ENCODE measurements at regions of chr12 and their contacts with region 1.

Region 1: DNA sequence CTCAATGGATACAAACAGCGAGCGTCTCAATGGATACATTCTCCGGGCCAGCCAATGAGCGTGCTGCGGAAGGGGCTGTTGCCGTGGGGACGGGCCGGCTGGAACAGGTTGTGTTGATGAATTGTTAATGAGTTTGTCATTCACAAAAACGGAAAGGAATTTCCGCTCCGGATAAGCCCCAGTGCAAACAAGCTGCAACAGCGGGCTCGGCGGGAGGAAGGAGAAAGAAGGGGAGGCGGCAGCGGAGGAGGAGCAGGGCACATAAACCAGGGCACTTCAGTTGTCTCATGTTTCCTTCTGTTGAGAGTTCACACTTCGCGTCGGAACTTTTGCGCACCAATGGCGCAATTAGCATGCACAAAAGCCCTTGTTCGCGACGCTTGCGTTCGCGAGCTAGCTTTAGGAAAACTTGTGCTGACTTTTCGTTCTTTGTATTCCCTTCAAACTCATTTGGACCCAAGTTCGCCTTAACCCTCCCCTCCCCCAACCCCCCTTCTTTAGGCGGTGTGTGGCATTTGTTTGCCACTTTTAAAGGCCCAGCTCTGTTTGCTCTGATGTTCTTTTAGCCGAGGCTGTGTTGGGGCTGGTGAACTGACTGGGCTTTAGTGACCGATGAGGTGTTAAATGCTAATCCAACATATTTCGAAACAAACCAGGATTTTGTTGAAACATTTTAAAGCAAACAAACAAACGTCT is at the start of gene DUSP6:
- DNase-seq: peak; percentile 97
- H3K4me3 Mint-ChIP-seq: peak within 1 kb of the TSS; percentile 92
- H3K27ac Mint-ChIP-seq: peak within 1 kb of the TSS; percentile 96
- H3K4me1 Mint-ChIP-seq: peaks cover 36% of the 10 kb centered on the region
- H3K27me3 Mint-ChIP-seq: peaks cover 2% of the 10 kb centered on the region
- total RNA-seq, gene DUSP6: 86.7 to 87.9 TPM

Region 2: GRCh38 chr12:89019408-89020120 is 333.1 kb before region 1 on chr12:
- CTCF ChIA-PET with region 1: interaction called, 6 read pairs
- POLR2A ChIA-PET with region 1: no interaction called
- intact Hi-C with region 1: loop called (anchors 1 kb)
- DNase-seq: peak; percentile 79
- H3K4me3 Mint-ChIP-seq: no peak overlapping the region
- H3K27ac Mint-ChIP-seq: no peak overlapping the region
- H3K4me1 Mint-ChIP-seq: peaks cover 8% of the 10 kb centered on the region
- H3K27me3 Mint-ChIP-seq: peaks cover 5% of the 10 kb centered on the region

Region 3: GRCh38 chr12:89162704-89163261 is 189.9 kb before region 1 on chr12:
- CTCF ChIA-PET with region 1: interaction called, 3 read pairs
- POLR2A ChIA-PET with region 1: interaction called, 13 read pairs
- intact Hi-C with region 1: loop called (anchors 1 kb)
- DNase-seq: peak; percentile 90
- H3K4me3 Mint-ChIP-seq: no peak overlapping the region
- H3K27ac Mint-ChIP-seq: no peak overlapping the region
- H3K4me1 Mint-ChIP-seq: peaks cover 13% of the 10 kb centered on the region
- H3K27me3 Mint-ChIP-seq: no peaks in the 10 kb centered on the region

Region 4: GRCh38 chr12:89252284-89252683 is 100.4 kb before region 1 on chr12:
- CTCF ChIA-PET with region 1: no interaction called
- POLR2A ChIA-PET with region 1: interaction called, 59 read pairs
- intact Hi-C with region 1: no loop called
- DNase-seq: peak; percentile 21
- H3K4me3 Mint-ChIP-seq: no peak overlapping the region
- H3K27ac Mint-ChIP-seq: peak overlapping the region; percentile 81
- H3K4me1 Mint-ChIP-seq: peaks cover 34% of the 10 kb centered on the region
- H3K27me3 Mint-ChIP-seq: no peaks in the 10 kb centered on the region

Region 5: GRCh38 chr12:89427508-89428156 is 75.0 kb after region 1 on chr12:
- CTCF ChIA-PET with region 1: no interaction called
- POLR2A ChIA-PET with region 1: interaction called, 4 read pairs
- intact Hi-C with region 1: loop called (anchors 2 kb)
- DNase-seq: peak; percentile 27
- H3K4me3 Mint-ChIP-seq: no peak overlapping the region
- H3K27ac Mint-ChIP-seq: peak overlapping the region; percentile 42
- H3K4me1 Mint-ChIP-seq: peaks cover 22% of the 10 kb centered on the region
- H3K27me3 Mint-ChIP-seq: no peaks in the 10 kb centered on the region

Region 6: DNA sequence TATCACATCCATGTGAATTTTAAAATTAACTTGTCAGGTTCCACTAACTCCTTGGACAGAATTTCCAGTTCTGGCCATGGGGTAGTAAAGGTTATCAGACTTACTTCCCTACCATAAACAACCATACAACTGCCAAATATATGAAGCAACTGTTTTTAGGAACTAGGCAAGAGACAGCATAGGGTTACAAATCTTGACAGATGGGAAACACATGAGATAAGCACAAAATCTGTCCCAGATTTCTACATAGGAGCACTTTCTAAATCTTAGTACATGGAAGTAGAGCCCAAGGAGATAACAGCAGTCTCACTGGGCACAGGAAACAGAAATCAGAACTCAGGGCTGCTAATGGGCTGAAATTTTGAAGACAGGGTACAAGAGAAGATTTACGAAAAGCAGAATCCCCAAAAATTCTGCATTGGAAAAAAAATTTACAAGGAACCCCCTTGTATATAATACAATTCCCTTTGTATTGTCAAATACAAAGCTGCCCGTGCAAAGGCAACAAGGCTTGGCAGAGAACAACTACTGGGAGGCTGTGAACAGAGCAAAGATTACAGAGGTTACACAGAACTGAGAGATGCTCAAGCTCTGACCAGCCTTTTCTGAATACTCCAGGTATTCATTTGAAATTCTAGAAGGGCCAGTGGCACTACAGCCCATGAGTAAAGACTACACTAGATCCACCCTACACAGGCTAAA is 128.7 kb after region 1 on chr12:
- CTCF ChIA-PET with region 1: no interaction called
- POLR2A ChIA-PET with region 1: no interaction called
- intact Hi-C with region 1: no loop called
- DNase-seq: no peak
- H3K4me3 Mint-ChIP-seq: no peak overlapping the region
- H3K27ac Mint-ChIP-seq: no peak overlapping the region
- H3K4me1 Mint-ChIP-seq: peaks cover 10% of the 10 kb centered on the region
- H3K27me3 Mint-ChIP-seq: no peaks in the 10 kb centered on the region

Region 7: DNA sequence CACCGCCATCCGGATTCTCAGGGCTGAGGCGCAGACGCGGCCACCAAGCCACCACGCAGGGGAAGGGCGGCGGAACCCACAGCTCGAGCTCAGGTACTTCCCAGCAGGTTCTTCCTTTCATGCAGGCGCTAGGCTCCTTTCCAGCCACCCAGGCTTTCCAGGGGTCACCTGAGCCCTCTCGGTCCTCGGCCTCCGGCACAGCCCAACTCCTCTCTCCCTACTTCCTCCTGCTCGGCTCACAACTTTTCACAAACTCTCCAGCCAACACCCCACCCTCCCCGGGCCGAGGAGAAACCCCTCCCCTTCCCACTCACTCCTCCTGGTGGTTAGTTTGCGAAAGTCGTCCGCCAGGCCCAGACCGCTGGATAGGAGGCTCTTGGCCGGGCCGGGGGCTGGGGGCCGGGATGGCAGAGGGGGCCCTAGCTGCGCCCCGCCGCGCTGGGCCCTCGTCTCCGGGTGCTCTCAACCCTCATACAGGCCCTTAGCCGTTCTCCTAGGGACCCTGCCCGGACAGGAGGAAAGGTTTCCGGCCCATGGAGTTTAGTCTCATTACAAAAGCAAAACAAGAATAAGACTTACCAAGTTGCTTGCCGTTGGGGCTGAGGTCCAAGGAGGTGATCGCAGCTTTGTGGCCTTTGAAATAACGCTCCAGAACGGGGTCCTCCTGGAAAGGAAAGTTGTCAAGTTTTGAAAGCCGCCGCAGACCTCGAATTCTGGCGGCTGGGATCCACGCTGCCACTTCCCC is 172.1 kb after region 1 on chr12 and contains the start of gene GALNT4:
- CTCF ChIA-PET with region 1: interaction called, 5 read pairs
- POLR2A ChIA-PET with region 1: interaction called, 25 read pairs
- intact Hi-C with region 1: loop called (anchors 1 kb)
- DNase-seq: peak; percentile 86
- H3K4me3 Mint-ChIP-seq: peak within 1 kb of the TSS; percentile 99
- H3K27ac Mint-ChIP-seq: peak within 1 kb of the TSS; percentile 98
- H3K4me1 Mint-ChIP-seq: peaks cover 45% of the 10 kb centered on the region
- H3K27me3 Mint-ChIP-seq: no peaks in the 10 kb centered on the region
- total RNA-seq, gene GALNT4: 5.8 to 6.0 TPM

Measured in activated CD4-positive, alpha-beta memory T cell treated with anti-CD3 and anti-CD28 coated beads for 36 hours (primary cell).